Activated CD4-positive, alpha-beta T cell treated with anti-CD3 and anti-CD28 coated beads, Interleukin-2, amount 10 ng/mL, durations not matched to agents 24 days and 14 days (primary cell): ENCODE measurements at regions of chr16 and their contacts with region 1.

Region 1: DNA sequence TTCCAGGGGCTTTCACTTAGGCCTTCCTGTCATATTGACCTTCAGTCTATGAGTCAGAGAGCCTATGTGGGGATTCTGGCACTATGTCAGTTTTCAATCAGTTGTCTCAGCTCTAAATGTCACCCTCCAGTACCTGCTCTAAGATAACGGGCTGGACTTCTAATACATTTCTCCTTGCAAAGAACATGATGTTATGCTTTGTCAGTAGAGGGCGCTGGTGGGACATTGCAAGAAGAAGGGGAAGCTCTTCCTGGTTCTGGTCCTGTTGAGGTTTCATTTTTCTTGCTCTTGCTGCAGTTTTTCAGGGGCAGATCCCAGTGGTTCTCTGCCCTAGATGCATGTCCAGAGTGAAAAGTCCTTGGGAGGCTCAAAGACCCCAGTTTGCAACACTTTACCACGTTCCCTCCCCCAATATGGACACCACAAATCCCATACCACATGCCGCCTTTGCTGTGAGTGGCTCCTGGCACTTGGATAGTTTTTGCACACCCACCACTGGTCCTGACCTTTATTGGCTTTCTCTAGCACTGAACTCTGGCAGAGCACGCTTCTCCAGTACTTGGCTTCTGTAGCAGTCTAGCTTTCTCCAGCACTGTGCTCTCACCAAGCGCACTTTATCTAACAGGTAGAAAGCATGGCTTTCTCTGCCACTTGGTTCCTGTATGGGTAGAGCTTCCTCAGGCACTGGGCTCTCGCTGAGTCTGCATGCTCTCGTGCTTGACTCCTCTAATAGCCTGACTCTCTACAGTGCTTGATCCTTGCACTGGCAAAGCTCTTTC is 49.0 kb downstream of the BCL7C start:
- DNase-seq: peak; percentile 95
- H3K4me3 Mint-ChIP-seq: peak overlapping the region; percentile 6
- H3K27ac Mint-ChIP-seq: peak overlapping the region; percentile 62
- H3K4me1 Mint-ChIP-seq: peaks cover 9% of the 10 kb centered on the region
- H3K27me3 Mint-ChIP-seq: no peaks in the 10 kb centered on the region

Region 2: DNA sequence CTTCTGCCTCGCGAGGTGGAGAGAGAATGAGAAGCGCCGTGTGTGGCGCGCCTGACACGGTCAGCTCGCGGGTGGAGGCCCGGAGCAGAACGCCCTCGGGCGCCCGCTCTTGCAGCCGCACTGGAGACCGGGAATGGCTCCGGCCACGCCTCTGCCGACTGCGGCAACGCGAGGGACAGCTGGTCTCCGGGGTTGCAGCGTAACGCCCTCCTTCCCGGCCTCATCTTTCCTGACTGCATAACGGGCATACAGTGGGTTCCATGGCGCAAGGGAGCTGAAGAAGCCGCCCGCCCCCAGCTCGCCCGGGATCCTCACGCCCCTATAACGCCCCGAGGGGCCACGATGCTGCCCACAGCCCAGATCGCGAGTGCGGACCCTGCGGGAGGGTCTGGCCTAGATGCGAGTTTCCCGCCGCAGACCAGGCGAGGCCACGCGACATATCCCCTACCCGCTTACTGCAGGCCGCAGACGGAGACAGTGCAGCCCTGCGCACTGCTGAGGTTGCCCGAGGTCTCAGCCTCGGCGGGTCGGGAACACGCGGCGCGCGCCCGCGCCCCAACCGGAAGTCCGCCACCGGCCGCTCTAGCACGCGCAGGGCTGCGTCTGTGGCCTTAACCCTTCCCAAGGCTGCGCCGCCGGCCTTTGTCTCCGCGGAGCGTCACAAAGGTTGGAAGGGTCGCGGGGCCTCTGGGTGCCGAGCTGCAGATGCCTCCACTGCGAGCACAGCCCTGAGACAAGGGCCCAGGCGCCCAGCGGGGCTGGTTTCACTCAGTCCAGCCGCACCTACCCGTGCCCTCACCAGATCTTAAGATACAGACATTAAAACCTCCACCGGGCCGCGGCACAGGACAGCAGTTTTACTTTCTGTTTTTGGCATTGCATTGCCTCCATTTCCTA is 30.2 kb after region 1 on chr16:
- intact Hi-C with region 1: loop called (anchors 1 kb)
- DNase-seq: peak; percentile 97
- H3K4me3 Mint-ChIP-seq: peak overlapping the region; percentile 96
- H3K27ac Mint-ChIP-seq: peak overlapping the region; percentile 86
- H3K4me1 Mint-ChIP-seq: peaks cover 24% of the 10 kb centered on the region
- H3K27me3 Mint-ChIP-seq: no peaks in the 10 kb centered on the region

Region 3: GRCh38 chr16:30902029-30902972 is 57.4 kb after region 1 on chr16:
- intact Hi-C with region 1: loop called (anchors 1 kb)
- DNase-seq: peak; percentile 90
- H3K4me3 Mint-ChIP-seq: peak overlapping the region; percentile 92
- H3K27ac Mint-ChIP-seq: peak overlapping the region; percentile 99
- H3K4me1 Mint-ChIP-seq: peaks cover 28% of the 10 kb centered on the region
- H3K27me3 Mint-ChIP-seq: no peaks in the 10 kb centered on the region

Region 4: DNA sequence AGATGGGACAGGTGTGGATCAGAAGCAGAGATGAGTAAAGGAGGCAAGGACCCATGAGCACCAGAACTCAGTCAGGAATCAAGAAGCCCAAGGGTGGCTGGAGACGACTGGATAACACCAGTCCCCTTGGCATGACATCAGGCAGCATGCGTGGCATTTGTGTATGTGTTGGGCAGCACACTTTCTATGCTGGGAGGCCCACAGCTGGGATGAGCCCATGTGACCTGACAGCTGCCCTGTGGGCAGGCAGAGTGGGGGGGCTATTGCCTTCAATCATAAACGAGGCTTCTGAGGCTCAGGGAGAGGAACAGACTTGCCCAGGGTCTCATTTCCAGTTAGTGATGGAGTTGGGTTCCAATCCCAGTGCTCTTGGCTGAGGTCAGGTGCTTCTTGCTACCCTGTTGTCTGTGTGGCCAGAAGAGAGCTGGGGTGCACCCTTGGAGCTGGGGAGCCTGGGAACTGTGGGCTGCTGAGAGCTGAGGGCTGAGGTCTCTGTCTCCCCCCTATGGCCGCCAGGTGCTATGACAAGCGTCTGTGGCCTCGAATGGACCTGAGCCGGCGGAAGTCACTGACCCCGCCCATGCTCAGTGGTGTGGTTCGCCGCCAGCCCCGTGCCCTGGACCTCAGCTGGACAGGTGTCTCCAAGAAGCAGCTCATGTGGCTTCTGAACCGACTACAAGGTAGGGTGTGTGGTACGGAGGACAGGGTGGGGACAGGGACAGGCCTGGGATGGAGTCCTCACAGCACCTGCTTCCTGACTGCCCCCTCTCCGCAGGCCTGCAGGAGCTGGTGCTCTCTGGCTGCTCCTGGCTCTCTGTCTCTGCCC is 97.0 kb after region 1 on chr16:
- intact Hi-C with region 1: loop called (anchors 1 kb)
- DNase-seq: peak; percentile 92
- H3K4me3 Mint-ChIP-seq: peak overlapping the region; percentile 63
- H3K27ac Mint-ChIP-seq: peak overlapping the region; percentile 75
- H3K4me1 Mint-ChIP-seq: peaks cover 27% of the 10 kb centered on the region
- H3K27me3 Mint-ChIP-seq: no peaks in the 10 kb centered on the region